ENCODE measurements at regions of chr12 and their contacts with region 1.

Region 1: DNA sequence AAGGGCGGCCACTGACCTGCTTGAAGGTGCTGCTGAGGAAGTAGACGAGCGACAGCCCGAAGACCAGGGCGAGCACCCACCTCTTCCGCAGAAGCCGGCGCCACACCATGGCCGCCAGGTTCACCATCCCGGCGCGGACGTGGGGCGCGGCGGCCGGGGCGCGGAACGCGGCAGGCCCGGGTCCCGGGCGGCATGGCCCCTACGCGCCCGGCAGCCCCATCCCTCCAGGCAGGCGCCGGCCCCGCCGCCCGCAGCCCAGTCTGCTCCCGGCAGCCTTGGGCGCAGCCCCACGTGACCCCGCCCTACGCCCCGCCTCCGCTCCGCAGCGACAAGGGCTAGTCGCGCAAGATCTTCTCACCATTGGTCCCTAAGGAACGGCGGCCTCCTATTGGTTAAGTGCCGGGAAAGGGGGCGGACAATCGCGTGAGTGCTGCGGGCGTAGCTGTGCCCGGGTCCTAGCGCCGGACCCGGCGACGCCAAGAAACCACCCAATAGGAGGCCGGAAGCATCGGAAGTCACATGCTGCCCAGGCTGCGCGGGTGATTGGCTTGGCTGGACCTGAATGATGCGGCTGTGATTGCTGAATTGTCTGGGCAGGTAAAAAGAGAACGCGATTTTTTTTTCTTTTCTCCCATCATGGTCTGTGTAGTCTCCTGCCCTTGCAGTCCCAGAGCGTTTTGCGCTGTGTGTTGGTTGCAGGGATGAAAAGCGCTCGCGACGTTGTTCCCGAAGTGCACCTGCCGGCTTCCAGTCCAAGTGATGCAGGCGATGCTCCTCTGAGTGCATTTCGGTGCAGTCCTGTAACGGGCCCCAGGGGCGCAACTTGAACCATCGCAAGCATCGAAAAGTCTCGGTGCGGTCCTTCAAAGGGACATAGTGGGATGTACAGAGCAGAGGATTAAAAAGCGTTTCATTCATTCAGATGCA is at the starts of genes RNFT2 and SPRING1:
- DNase-seq: peak; percentile 99
- H3K4me3 ChIP-seq: peak within 1 kb of the TSS; percentile 58 to 98
- H3K4me3 Mint-ChIP-seq: peak within 1 kb of the TSS; percentile 92 to 98 (median 95)
- H3K27ac ChIP-seq: peak within 1 kb of the TSS; percentile 50
- H3K27ac Mint-ChIP-seq: peak within 1 kb of the TSS; percentile 87 to 95 (median 92)
- H3K4me1 ChIP-seq: peaks cover 27% of the 10 kb centered on the region
- H3K4me1 Mint-ChIP-seq: peaks cover 17 to 48% (median 31%) of the 10 kb centered on the region in 4 donors
- H3K27me3 ChIP-seq: no peaks in the 10 kb centered on the region
- H3K27me3 Mint-ChIP-seq: no peaks in the 10 kb centered on the region
- total RNA-seq, gene RNFT2: 4.0 to 5.9 TPM
- total RNA-seq, gene SPRING1: 26.5 to 28.1 TPM

Region 2: DNA sequence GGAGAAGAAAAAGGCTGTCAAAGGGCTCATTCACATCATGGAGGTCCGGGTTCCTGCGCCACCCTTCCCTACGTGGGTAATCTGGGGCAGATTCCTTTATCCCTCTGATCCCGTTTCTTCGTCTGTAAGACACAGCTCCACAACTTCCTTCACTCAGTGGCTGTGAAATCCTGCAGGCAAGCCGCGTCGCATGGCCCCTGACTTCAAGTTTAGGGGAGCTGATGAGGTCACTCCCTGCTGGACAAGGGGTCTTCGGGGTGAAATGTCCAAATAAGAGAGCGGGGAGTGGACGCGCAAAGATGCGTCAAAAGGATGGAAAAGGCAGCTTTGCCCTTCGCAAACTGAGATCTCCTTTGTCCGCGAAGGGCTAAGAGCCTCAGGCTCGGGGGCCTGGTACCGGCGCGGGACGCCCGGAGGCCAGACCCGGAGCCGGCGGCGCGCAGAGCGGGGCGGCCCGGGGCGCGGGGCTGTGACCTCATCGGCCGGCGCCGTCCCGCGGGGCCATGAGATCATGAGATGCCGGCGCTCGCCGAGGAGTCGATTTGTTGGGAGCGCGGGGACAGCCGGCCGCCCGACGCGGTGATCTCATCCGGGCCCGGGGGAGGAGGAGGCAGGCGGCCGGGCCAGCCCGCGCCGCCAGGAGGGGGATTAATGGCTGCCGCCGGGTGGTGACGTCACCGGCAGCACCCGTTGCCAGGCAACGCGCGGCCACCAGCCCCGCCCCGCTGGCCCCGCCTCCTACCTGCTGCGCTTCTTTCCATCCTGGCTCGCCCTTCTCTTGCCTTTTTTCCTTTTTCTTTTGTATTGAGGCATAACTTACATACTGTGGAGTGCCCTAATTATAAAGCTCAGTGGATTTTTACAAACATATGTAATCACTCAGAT is 81.2 kb after region 1 on chr12:
- CTCF ChIA-PET with region 1: no interaction called
- POLR2A ChIA-PET with region 1: no interaction called
- intact Hi-C with region 1: loop called (anchors 1 kb)
- DNase-seq: peak; percentile 92 to 93 (median 93)
- H3K4me3 ChIP-seq: peak overlapping the region; percentile 67 to 86
- H3K4me3 Mint-ChIP-seq: peak overlapping the region; percentile 92 to 96 (median 93)
- H3K27ac ChIP-seq: peak overlapping the region; percentile 87
- H3K27ac Mint-ChIP-seq: peak overlapping the region; percentile 96 to 100 (median 98)
- H3K4me1 ChIP-seq: peaks cover 17% of the 10 kb centered on the region
- H3K4me1 Mint-ChIP-seq: peaks cover 10 to 31% (median 22%) of the 10 kb centered on the region in 4 donors
- H3K27me3 ChIP-seq: no peaks in the 10 kb centered on the region
- H3K27me3 Mint-ChIP-seq: peaks cover 0 to 2% of the 10 kb centered on the region in 2 donors

Region 3: DNA sequence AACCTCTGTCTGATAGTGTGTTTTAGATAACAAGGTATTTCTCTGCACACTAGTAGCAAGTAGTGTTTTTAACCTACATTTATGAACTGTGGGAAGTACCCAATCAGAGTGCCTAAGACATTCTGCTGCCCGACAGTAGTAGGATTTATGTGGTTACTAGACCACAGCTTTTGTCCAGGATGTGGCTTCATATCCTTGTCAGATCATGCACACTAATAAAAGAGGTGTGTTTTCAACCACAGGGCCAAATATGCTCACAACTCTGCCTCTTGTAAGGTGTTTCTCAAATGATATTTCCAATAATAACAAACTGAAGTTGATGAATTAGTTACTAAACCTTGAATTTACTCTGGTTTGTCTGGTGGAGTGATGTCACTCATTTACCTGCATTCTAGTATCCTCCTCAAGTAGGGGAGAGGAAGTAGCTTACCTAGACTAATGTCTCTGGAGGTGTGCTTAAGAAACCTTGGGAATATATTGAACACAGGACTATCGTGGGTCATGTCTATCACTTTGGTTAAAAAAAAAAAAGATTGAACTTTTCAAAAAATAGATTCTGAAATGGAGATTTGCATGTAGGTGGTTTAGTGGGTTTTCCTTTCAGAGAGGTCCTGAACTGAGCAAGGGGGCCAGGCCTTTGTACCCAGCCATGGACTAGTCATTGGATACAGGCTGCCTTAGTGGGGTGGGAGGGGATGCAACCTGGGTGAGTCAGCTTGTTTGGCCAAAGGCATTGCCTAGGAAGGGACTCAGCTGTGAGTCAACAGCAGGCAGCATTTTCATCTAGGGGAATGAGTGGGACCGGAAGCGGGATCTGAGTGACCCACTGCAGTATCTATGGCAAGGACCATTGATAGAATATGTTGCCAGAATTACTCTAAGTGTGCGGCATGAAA is 186.8 kb after region 1 on chr12:
- CTCF ChIA-PET with region 1: no interaction called
- POLR2A ChIA-PET with region 1: interaction called, 4 read pairs
- intact Hi-C with region 1: loop called (anchors 1 kb)
- DNase-seq: peak; percentile 83 to 90 (median 85)
- H3K4me3 ChIP-seq: no peak overlapping the region
- H3K4me3 Mint-ChIP-seq: peak overlapping the region in 7 of 8 donors; percentile 45 to 86 (median 77)
- H3K27ac ChIP-seq: no peak overlapping the region
- H3K27ac Mint-ChIP-seq: peak overlapping the region; percentile 78 to 93 (median 86)
- H3K4me1 ChIP-seq: peaks cover 69% of the 10 kb centered on the region
- H3K4me1 Mint-ChIP-seq: peaks cover 48 to 75% (median 62%) of the 10 kb centered on the region in 4 donors
- H3K27me3 ChIP-seq: no peaks in the 10 kb centered on the region
- H3K27me3 Mint-ChIP-seq: no peaks in the 10 kb centered on the region

Region 4: DNA sequence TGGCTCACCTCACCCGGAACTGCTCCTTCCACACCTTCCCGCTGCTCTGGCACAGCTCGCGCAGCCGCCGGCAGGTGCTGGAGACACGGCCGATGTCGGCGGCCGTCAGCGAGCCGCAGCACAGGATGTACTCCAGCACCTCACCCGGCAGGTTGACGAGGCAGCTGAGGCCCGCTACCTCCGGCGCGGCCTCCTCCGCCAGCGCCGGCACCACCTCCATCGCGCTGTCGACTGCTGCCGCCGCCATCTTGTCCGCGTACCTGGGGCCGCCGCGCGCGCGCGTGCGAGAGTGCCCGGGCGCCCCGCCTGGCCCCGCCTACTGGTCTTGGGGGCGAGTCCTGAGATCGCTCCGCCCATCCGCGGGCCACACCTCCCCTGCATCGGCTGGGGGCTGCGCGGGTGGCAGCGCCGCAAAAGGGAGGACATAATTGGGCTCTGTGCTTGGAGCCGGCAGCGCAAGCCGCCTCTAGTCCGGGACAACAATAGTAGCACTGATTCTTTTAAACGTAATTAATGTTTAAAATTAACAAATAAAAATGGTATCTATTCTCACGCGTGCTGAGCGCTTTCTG is 452.3 kb after region 1 on chr12 and contains the start of gene FBXO21:
- CTCF ChIA-PET with region 1: no interaction called
- POLR2A ChIA-PET with region 1: interaction called, 3 read pairs
- intact Hi-C with region 1: loop called (anchors 1 kb)
- DNase-seq: peak; percentile 92 to 96 (median 93)
- H3K4me3 ChIP-seq: peak within 1 kb of the TSS; percentile 66 to 81
- H3K4me3 Mint-ChIP-seq: peak within 1 kb of the TSS; percentile 94 to 99 (median 96)
- H3K27ac ChIP-seq: peak within 1 kb of the TSS; percentile 67
- H3K27ac Mint-ChIP-seq: peak within 1 kb of the TSS; percentile 89 to 97 (median 95)
- H3K4me1 ChIP-seq: peaks cover 26% of the 10 kb centered on the region
- H3K4me1 Mint-ChIP-seq: peaks cover 19 to 50% (median 29%) of the 10 kb centered on the region in 4 donors
- H3K27me3 ChIP-seq: no peaks in the 10 kb centered on the region
- H3K27me3 Mint-ChIP-seq: no peaks in the 10 kb centered on the region
- total RNA-seq, gene FBXO21: 41.9 to 47.8 TPM

Measured in CD4-positive, alpha-beta memory T cell (primary cell).